ENCODE measurements at regions of chr12 and their contacts with region 1.

Region 1: DNA sequence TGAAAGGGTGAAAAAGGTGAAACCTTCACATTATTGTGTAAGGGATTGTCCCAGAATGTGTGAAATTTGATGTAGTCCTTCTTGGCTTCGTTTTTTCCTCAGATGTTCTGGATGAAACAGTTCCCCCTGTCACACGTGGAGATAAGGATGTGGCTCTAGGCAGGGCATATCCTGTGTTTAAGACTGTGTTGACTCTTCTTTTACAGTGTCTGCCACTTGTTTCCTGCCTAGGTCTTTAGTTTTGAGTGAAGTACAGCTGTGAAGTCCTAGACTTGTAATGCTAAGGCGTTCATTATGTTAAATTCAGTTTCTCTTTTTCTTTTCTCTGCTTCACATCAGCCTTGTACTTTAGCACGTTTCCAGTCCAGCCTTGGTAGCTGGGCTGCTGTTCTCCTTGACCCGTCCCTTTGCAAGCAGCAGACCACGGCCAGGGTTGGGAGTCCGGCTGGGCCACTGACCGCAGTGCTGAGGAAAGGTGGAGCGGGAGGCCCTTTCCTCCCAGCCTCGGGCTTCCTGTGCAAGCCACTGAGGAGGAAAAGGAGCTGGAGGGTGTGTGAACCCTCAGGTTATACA is 59.1 kb downstream of the RASSF3 start:
- DNase-seq: peak; percentile 82
- ATAC-seq: peak; percentile 29

Region 2: GRCh38 chr12:64625243-64626077 is 43.9 kb before region 1 on chr12:
- intact Hi-C with region 1: loop called (anchors 5 kb)
- DNase-seq: peak; percentile 77
- ATAC-seq: peak; percentile 94

Region 3: DNA sequence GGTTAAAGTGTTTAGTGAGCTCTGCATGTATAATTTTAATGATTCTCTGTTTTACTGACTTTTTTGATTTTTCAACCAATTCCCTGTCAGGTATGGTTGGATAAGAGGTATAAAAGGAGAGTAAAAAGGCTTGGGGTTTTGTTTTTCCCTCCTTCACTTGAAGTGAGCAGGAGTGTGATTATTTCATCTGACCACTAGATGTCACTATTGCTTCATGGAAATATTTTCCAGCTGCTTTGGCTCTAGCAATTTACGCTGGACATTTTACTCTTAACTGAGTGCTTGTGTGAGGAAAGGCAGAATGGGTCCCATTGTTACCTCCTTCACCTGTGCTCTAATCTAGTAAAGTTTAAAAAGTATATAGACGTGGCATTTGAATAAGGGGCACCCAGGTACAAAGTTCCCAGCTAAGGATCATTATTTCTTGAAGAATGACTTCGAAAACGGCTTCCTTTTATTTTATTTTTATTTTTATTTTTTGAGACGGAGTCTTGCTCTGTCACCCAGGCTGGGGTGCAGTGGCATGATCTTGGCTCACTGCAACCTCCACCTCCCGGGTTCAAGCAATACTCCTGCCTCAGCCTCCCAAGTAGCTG is 221.6 kb after region 1 on chr12:
- intact Hi-C with region 1: no loop called
- DNase-seq: no peak
- ATAC-seq: peak; percentile 67

Region 4: GRCh38 chr12:64903479-64904152 is 234.3 kb after region 1 on chr12:
- intact Hi-C with region 1: no loop called
- DNase-seq: no peak
- ATAC-seq: no peak

Region 5: DNA sequence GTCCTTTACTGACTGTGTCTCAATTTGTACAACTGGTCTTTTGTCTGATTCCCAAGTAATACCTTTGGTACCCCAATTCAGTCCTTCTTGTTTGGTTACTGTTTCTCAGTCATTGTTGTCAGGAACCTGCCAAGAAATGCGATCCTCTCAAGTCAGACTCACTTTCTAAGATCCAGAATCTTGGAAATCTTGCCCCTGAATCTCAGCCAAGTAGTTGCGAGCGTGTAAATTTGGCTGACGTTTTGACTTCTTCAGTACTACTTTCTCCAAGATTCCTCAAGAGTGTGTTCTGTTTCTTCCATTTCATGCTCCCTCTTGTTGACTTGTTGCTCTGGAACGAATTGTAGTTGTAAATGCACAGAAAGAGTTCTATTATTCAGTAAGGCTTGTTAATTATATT is 723.1 kb after region 1 on chr12:
- intact Hi-C with region 1: no loop called
- DNase-seq: no peak
- ATAC-seq: no peak